ENCODE measurements at regions of chr9 and their contacts with region 1.

Region 1: DNA sequence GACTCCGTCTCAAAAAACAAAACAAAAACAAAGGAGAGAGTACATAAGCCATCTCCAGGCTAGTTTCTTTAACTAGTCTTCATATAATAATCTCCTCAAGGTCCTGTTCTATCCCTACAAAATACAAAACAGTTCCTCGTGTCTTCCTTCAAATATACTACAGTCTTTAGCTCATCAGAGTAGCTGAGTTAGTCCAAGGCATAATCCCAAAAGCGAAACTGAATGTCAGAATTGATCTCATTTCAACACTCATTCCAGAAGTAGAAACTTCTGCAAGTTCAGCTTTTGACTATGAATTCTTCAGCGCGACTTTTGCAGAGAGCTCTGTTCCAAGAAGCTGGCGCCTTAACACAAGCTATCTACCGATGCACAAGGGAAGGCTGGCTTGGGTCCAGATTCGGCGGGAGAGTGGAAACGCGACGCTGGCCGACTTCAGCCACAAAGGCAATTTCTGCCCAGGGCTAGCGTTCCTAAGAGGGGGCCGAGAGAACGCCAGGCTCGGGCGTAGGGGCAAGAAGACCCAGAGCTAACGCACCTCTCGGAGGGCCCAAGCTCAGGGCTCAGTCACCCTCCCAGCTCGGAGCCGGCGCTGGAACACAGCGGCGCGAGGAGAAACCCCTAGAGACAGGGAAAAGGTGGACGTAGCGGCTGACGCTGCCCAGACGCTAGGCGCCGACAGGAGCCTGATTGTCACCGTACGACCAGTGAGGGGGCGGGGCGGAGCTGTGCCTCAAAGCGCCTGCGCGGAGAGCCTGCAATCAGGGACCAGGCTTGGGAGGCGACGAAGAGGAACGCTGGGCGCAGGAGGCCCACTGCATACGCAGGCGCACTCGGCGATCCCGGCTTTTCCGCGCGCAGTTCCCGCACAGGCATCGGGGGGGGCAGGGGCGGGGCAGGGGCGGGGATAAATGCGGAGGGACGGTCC is 469 bp upstream of the HSDL2 start:
- DNase-seq: peak; percentile 100
- H3K4me3 ChIP-seq: peak overlapping the region; percentile 60 to 84 (median 62)
- H3K27ac ChIP-seq: peak overlapping the region; percentile 96 to 100 (median 99)
- H3K4me1 ChIP-seq: peaks cover 33 to 39% of the 10 kb centered on the region in 2 donors
- H3K27me3 ChIP-seq: no peaks in the 10 kb centered on the region
- CTCF ChIP-seq: peak in 1 of 6 experiments; percentile 28
- POLR2A ChIP-seq: peak; percentile 83 to 96

Region 2: DNA sequence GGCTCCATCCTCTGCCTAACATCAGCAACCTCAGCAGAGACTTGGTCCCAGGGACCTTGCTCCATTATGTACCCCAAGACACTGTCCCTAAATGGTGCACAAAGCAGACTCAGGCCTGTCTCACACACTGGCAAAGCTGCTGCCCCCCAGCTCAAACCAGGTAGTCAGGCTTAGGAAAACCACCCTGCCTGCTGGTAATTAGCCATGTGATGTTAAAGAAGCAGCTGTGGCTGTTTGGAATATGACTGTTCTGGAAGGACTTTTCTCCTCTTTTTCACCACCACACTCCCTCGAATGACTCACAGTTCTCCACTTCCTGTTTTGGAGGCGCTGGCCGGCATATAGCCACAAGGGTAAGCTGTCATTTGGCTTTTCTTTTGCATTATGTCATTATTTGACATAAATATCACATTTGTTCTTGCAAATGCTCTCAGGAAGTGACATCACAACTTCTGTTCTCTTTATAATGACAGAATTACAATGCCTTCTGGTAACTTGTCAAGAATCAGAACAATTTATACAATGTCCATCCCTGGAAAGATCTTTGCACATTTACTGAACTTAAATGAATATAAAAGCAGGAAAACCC is 318.2 kb before region 1 on chr9:
- intact Hi-C with region 1: no loop called
- DNase-seq: peak; percentile 14 to 20
- H3K4me3 ChIP-seq: no peak overlapping the region
- H3K27ac ChIP-seq: peak overlapping the region in 2 of 3 donors; percentile 52 to 53
- H3K4me1 ChIP-seq: peaks cover 4 to 5% of the 10 kb centered on the region in 2 donors
- H3K27me3 ChIP-seq: no peaks in the 10 kb centered on the region
- CTCF ChIP-seq: no peak
- POLR2A ChIP-seq: no peak

Region 3: GRCh38 chr9:112486221-112487007 is 107.0 kb after region 1 on chr9 and contains the start of gene KIAA1958:
- intact Hi-C with region 1: loop called (anchors 10 kb)
- DNase-seq: peak; percentile 87 to 88
- H3K4me3 ChIP-seq: peak within 1 kb of the TSS; percentile 34 to 79 (median 71)
- H3K27ac ChIP-seq: peak within 1 kb of the TSS; percentile 49 to 91 (median 73)
- H3K4me1 ChIP-seq: peaks cover 0 to 9% of the 10 kb centered on the region in 2 donors
- H3K27me3 ChIP-seq: no peaks in the 10 kb centered on the region
- CTCF ChIP-seq: no peak
- POLR2A ChIP-seq: peak in 1 of 2 donors; percentile 84
- total RNA-seq, gene KIAA1958: 8.3 to 11.2 (median 9.6) TPM

Measured in thyroid gland (tissue), 4 donors.